AG04450 (cell line): ENCODE measurements at regions of chr3 and their contacts with region 1.

Region 1: DNA sequence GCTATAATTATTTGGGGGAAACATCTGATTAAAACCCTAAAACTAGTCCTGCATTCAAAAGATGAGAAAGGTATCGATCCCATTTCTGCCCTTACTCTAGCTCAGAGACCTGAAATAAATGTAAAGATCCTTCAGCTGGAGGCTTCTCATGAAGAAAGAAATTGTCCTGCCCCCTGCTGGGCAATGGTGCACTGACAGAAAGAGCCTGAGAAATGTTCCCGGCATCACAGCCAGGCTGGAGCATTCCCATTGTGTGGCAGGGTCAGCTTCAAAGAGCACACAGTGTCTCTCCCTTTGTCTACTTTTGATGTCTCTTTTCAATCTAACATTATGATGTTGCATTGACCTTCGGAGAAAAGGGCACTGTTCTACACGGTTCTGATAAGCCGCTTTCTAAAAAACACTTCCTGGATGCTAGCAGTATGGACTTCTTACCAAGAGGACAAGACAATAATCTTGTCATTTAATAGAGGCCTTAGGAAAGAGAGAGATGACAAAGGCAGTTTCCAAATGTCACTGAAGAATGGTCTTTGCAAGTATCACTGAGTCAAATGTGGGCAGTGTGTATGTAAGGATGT is 287.5 kb downstream of the MAGI1 start:
- DNase-seq: no peak
- H3K4me3 ChIP-seq: no peak overlapping the region
- H3K27ac ChIP-seq: no peak overlapping the region
- H3K27me3 ChIP-seq: no peaks in the 10 kb centered on the region
- CTCF ChIP-seq: peak; percentile 78

Region 2: GRCh38 chr3:65425880-65426279 is 325.3 kb before region 1 on chr3:
- CTCF ChIA-PET with region 1: interaction called, 32 read pairs
- POLR2A ChIA-PET with region 1: no interaction called
- DNase-seq: no peak
- H3K4me3 ChIP-seq: no peak overlapping the region
- H3K27ac ChIP-seq: no peak overlapping the region
- H3K27me3 ChIP-seq: no peaks in the 10 kb centered on the region
- CTCF ChIP-seq: peak; percentile 73